T-cell (primary cell): ENCODE measurements at regions of chr14 and their contacts with region 1.

Region 1: DNA sequence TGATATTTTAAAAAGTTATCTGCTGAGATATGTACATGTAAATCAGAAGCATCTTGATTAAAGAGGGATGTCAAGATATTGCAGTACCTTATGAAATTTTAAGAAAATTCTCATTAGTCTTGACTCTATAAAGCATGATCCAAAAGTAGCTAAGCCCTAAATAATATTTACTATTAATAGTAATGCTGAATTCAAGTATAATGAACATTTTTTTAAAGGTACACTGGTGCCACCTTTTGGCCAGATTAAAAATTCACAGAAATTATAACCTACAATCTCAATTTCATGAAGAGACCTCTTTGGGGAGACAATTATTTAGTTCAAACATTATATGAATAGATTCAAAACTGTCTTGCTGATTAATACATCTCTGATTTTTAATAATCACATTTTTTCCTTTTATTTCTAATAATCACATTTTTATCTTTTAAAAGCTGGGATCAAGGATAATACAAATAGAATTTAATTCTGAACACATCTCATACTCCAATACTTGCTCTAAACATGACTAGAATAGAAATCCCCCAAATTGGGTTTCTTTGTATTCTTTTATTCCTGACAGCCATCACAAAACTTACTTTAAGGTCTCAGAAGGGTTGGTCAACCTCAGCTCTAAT is 13.4 kb downstream of the AKAP5 start:
- DNase-seq: peak in 1 of 35 experiments; percentile 65
- ATAC-seq: peak in 1 of 4 experiments; percentile 26
- H3K4me3 ChIP-seq: no peak overlapping the region
- H3K4me3 Mint-ChIP-seq: no peak overlapping the region
- H3K27ac ChIP-seq: no peak overlapping the region
- H3K27ac Mint-ChIP-seq: no peak overlapping the region
- H3K4me1 ChIP-seq: peaks cover 0 to 2% of the 10 kb centered on the region in 2 experiments
- H3K4me1 Mint-ChIP-seq: peaks cover 7 to 23% (median 21%) of the 10 kb centered on the region in 3 donors
- H3K27me3 ChIP-seq: no peaks in the 10 kb centered on the region
- H3K27me3 Mint-ChIP-seq: no peaks in the 10 kb centered on the region

Region 2: GRCh38 chr14:64349741-64350490 is 128.8 kb before region 1 on chr14:
- CTCF ChIA-PET with region 1: interaction called in 1 of 2 experiments, 31 read pairs
- POLR2A ChIA-PET with region 1: no interaction called
- DNase-seq: no peak
- ATAC-seq: no peak
- H3K4me3 ChIP-seq: no peak overlapping the region
- H3K4me3 Mint-ChIP-seq: no peak overlapping the region
- H3K27ac ChIP-seq: no peak overlapping the region
- H3K27ac Mint-ChIP-seq: no peak overlapping the region
- H3K4me1 ChIP-seq: no peaks in the 10 kb centered on the region
- H3K4me1 Mint-ChIP-seq: no peaks in the 10 kb centered on the region
- H3K27me3 ChIP-seq: no peaks in the 10 kb centered on the region
- H3K27me3 Mint-ChIP-seq: no peaks in the 10 kb centered on the region

Region 3: GRCh38 chr14:64503478-64504309 is 25.0 kb after region 1 on chr14 and contains the start of gene ZBTB25:
- CTCF ChIA-PET with region 1: interaction called, 3 to 6 read pairs
- POLR2A ChIA-PET with region 1: interaction called, 3 to 15 read pairs
- DNase-seq: peak; percentile 86 to 100 (median 99)
- ATAC-seq: peak; percentile 66 to 77 (median 68)
- H3K4me3 ChIP-seq: peak within 1 kb of the TSS; percentile 93 to 99
- H3K4me3 Mint-ChIP-seq: peak within 1 kb of the TSS; percentile 91 to 95 (median 92)
- H3K27ac ChIP-seq: peak within 1 kb of the TSS; percentile 100
- H3K27ac Mint-ChIP-seq: peak within 1 kb of the TSS; percentile 99
- H3K4me1 ChIP-seq: peaks cover 48 to 55% of the 10 kb centered on the region in 2 experiments
- H3K4me1 Mint-ChIP-seq: peaks cover 60 to 79% (median 72%) of the 10 kb centered on the region in 3 donors
- H3K27me3 ChIP-seq: no peaks in the 10 kb centered on the region
- H3K27me3 Mint-ChIP-seq: no peaks in the 10 kb centered on the region
- total RNA-seq, gene ZBTB25: 48.0 to 71.9 (median 51.2) TPM

Region 4: DNA sequence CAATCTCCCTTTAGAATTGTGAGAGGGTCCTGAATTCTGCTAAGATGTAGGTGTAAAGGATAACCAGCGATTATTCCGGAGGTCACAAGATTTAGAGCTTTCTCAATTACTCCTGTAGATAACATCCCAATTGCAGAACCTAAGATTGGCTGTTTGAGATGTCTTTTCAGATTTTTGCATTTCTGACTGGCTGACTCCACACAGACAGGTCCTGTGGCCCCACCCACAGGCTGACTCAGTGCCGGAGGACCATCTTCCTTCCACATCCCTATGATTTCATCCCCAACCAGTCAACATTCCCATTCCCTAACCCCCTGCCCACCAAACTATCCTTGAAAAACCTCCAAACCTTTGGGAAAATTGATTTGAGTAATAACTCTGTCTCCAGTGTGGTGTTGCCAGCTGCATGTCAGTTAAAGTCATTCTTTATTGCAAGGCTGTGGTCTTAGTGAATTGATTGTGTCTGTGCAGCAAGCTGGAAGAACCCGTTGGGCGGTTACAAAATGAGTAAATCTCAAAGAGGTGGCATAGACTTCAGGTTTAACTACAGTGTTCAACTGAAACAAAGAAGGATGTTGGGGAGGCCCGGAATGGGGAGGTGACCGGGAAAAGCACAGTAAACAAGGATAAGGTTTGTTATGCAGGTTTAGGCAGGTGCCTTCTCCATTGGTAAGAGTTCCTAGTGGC is 518.5 kb after region 1 on chr14:
- CTCF ChIA-PET with region 1: no interaction called
- POLR2A ChIA-PET with region 1: no interaction called
- DNase-seq: no peak
- ATAC-seq: peak in 1 of 4 experiments; percentile 63
- H3K4me3 ChIP-seq: no peak overlapping the region
- H3K4me3 Mint-ChIP-seq: peak overlapping the region in 2 of 3 donors; percentile 14 to 65
- H3K27ac ChIP-seq: no peak overlapping the region
- H3K27ac Mint-ChIP-seq: no peak overlapping the region
- H3K4me1 ChIP-seq: no peaks in the 10 kb centered on the region
- H3K4me1 Mint-ChIP-seq: peaks cover 4 to 20% (median 8%) of the 10 kb centered on the region in 3 donors
- H3K27me3 ChIP-seq: no peaks in the 10 kb centered on the region
- H3K27me3 Mint-ChIP-seq: no peaks in the 10 kb centered on the region